Natural killer cell (primary cell): ENCODE measurements at regions of chr17 and their contacts with region 1.

Region 1: DNA sequence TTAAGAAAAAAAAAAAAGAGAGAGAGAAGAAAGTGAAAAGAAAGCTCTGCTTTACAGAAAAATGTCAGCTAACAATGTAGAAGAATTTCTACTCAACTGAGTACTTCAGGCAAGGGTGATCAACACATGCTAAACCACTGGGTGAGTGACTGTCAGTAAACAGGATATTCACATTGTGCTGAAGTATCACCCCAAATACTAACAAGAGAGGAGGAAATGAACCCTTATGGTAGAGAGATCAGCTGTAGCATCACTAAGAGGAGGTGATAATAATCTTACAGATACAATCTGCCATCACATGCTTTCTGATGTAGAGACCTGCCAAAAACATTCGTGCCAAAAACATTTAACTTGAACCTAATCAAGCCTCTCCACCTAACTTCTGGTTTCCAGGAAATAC is 30.7 kb upstream of the ICAM2 start:
- DNase-seq: peak in 1 of 2 donors; percentile 74
- ATAC-seq: peak; percentile 99 to 100 (median 99)
- H3K4me3 ChIP-seq: no peak overlapping the region
- H3K4me3 Mint-ChIP-seq: peak overlapping the region; percentile 51
- H3K27ac ChIP-seq: peak overlapping the region; percentile 78
- H3K27ac Mint-ChIP-seq: peak overlapping the region; percentile 90 to 94
- H3K4me1 ChIP-seq: peaks cover 33% of the 10 kb centered on the region
- H3K4me1 Mint-ChIP-seq: peaks cover 26 to 36% of the 10 kb centered on the region in 2 donors
- H3K27me3 ChIP-seq: no peaks in the 10 kb centered on the region
- H3K27me3 Mint-ChIP-seq: no peaks in the 10 kb centered on the region
- CTCF ChIP-seq: no peak

Region 2: GRCh38 chr17:63961355-63962212 is 89.6 kb before region 1 on chr17:
- intact Hi-C with region 1: no loop called
- DNase-seq: peak in 1 of 2 donors; percentile 54
- ATAC-seq: peak; percentile 77 to 82 (median 79)
- H3K4me3 ChIP-seq: no peak overlapping the region
- H3K4me3 Mint-ChIP-seq: peak overlapping the region; percentile 49
- H3K27ac ChIP-seq: no peak overlapping the region
- H3K27ac Mint-ChIP-seq: peak overlapping the region; percentile 56 to 77
- H3K4me1 ChIP-seq: peaks cover 17% of the 10 kb centered on the region
- H3K4me1 Mint-ChIP-seq: peaks cover 7 to 21% of the 10 kb centered on the region in 2 donors
- H3K27me3 ChIP-seq: no peaks in the 10 kb centered on the region
- H3K27me3 Mint-ChIP-seq: no peaks in the 10 kb centered on the region
- CTCF ChIP-seq: no peak

Region 3: GRCh38 chr17:64020056-64020766 is 30.9 kb before region 1 on chr17 and contains the start of gene ICAM2:
- intact Hi-C with region 1: loop called (anchors 1 kb)
- DNase-seq: peak; percentile 85 to 99
- ATAC-seq: peak; percentile 66 to 89 (median 74)
- H3K4me3 ChIP-seq: peak within 1 kb of the TSS; percentile 55
- H3K4me3 Mint-ChIP-seq: peak within 1 kb of the TSS; percentile 98
- H3K27ac ChIP-seq: peak within 1 kb of the TSS; percentile 91
- H3K27ac Mint-ChIP-seq: peak within 1 kb of the TSS; percentile 94 to 100
- H3K4me1 ChIP-seq: peaks cover 73% of the 10 kb centered on the region
- H3K4me1 Mint-ChIP-seq: peaks cover 73 to 74% of the 10 kb centered on the region in 2 donors
- H3K27me3 ChIP-seq: no peaks in the 10 kb centered on the region
- H3K27me3 Mint-ChIP-seq: no peaks in the 10 kb centered on the region
- CTCF ChIP-seq: no peak
- total RNA-seq, gene ICAM2: 73.2 to 91.0 (median 78.0) TPM

Region 4: DNA sequence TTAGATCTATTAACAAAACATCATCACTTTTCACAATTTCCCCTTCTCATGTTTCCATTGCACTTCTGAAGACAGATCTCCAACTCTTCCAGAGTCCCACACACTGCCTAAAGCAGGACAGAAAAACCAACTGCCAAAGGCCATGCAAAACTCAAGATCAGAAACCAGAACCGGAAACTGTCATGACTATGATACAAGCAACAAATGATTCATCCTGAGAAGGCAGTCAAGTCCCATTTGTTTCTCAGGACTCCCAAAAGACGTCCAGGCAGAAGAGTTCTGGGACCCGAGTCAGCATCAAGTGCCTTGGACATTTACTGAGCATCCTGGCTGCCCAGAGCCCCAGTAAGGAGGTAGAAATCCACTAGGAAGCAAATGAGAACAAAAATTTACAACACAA is 40.0 kb after region 1 on chr17:
- intact Hi-C with region 1: loop called (anchors 5 kb)
- DNase-seq: peak in 1 of 2 donors; percentile 39
- ATAC-seq: no peak
- H3K4me3 ChIP-seq: no peak overlapping the region
- H3K4me3 Mint-ChIP-seq: no peak overlapping the region
- H3K27ac ChIP-seq: peak overlapping the region; percentile 12
- H3K27ac Mint-ChIP-seq: peak overlapping the region in 1 of 2 donors; percentile 77
- H3K4me1 ChIP-seq: peaks cover 10% of the 10 kb centered on the region
- H3K4me1 Mint-ChIP-seq: peaks cover 10 to 57% of the 10 kb centered on the region in 2 donors
- H3K27me3 ChIP-seq: no peaks in the 10 kb centered on the region
- H3K27me3 Mint-ChIP-seq: no peaks in the 10 kb centered on the region
- CTCF ChIP-seq: no peak

Region 5: DNA sequence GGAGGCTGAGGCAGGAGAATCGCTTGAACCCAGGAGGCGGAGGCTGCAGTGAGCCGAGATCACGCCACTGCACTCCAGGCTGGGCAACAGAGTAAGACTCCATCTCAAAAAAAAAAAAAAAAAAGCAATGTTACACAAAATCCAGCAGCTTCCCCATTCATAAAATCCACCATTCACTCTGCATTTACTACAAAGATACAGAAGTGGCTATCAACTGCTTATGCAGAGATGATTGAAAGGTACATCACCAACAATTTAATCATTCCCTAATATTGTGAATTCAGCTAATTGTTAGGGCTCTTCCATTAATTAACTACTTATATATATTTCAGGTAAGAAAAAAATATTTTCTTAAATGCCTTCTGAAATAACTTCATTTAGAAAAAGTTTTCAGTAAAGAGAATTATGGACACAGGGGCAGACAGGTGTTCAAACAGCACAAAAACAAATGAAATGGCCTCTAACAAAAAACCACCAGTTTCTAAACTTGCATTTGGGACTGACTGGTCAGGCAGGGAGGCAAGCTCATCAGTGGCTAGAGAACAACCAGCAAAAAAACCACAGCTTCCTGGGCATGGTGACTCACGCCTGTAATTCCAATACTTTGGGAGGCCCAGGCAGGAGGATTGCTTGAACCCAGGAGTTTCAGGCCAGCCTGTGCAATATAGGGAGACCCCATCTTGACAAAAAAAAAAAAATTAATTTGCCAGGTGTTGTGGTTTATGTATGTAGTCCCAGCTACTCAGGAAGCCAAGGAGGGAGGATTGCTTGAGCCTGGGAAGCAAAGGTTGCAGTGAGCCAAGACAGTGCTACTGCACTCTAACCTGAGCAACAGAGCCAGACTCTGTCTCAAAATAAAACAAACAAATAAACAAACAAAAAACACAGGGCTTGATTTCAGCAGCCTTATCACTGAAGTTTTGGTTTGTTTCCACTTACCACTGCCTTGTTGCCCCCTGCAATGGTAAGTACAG is 52.5 kb after region 1 on chr17:
- intact Hi-C with region 1: no loop called
- DNase-seq: no peak
- ATAC-seq: no peak
- H3K4me3 ChIP-seq: no peak overlapping the region
- H3K4me3 Mint-ChIP-seq: no peak overlapping the region
- H3K27ac ChIP-seq: no peak overlapping the region
- H3K27ac Mint-ChIP-seq: peak overlapping the region in 1 of 2 donors; percentile 35
- H3K4me1 ChIP-seq: peaks cover 13% of the 10 kb centered on the region
- H3K4me1 Mint-ChIP-seq: peaks cover 31 to 50% of the 10 kb centered on the region in 2 donors
- H3K27me3 ChIP-seq: no peaks in the 10 kb centered on the region
- H3K27me3 Mint-ChIP-seq: no peaks in the 10 kb centered on the region
- CTCF ChIP-seq: no peak